BJ (cell line): ENCODE measurements at regions of chr10 and their contacts with region 1.

Region 1: GRCh38 chr10:59124187-59124586 is 52.3 kb upstream of the PHYHIPL start:
- DNase-seq: no peak
- H3K4me3 ChIP-seq: no peak overlapping the region
- H3K27me3 ChIP-seq: 0 out of 2 replicates have a peak, but pooled peaks cover 1% of the 10 kb centered on the region
- CTCF ChIP-seq: no peak

Region 2: DNA sequence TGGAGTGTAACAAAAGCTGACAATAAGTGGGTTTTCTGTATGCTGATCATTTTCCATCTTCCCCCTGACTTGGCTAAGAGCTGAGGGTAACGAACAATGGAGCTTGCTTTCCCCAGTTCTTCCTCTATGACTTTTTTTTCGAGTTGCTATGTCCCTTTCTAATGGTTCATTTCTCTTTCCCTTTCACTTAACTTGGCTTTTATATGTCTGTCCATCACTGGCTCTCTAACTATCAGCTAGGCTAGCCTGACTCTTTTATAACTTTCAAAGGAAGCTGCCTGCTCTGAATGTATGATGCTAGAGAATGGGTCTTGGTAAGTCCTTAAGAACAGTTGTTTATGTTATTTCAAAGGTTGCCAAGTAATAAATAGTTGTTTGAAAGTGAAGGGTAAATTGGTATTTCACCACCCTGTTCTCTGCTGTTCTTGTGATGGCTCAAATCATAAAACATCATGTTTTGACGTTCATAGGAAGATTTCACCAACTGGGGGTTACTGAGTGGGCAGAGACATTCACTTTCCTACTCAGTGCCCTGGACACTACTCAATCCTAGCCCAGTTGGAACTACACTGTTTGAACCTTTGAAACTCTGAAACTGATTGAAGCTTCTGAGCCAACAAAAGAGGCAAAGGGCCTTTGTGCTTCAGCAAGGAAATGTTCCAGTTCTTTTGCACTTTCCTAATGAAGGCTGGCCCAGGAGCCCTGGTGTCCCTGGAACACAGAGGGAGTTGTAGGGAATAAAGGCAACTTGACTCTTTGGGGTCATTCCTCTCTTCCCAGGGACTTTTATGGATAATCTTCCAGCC is 33.2 kb before region 1 on chr10:
- CTCF ChIA-PET with region 1: no interaction called
- POLR2A ChIA-PET with region 1: no interaction called
- DNase-seq: no peak
- H3K4me3 ChIP-seq: no peak overlapping the region
- H3K27me3 ChIP-seq: no peaks in the 10 kb centered on the region; the same call in 1 of the 2 replicates
- CTCF ChIP-seq: no peak

Region 3: DNA sequence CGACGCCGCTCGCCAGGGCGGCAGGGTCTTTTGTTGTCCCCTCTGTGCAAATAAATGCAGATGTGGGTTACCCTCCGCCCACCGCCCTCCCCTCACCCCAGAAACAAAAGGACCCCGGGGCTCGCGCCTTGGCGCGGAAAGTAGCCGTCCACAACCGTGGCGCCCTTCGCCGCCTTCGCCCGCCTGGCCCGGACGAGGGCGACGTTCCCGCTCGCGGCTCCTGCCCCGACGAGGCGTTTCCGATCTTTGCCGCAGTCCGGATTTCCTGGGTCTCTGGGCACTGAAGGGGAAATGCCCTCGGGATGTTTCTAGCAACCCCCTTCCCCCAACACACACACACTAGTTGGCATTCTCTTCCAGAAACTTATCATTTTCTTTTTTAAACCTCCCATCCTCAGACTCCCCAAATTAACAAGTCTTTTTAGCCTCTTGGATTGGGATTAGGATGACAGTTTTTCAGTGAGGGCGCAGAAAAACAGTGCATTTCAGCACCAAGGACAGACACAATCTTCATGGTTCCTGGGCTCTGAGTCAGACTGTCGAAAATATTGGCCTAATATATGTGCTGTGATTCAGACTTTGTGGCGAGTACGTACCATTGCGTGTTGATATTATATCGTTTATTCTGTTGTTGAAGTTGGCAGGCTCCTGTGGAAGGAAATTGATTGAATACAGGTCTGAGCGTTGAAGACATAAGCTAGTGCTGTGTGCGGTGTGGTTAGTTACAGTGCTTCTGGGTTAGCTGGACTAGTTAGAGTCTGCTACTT is 53.0 kb after region 1 on chr10:
- CTCF ChIA-PET with region 1: no interaction called
- POLR2A ChIA-PET with region 1: no interaction called
- DNase-seq: peak; percentile 17
- H3K4me3 ChIP-seq: no peak overlapping the region
- H3K27me3 ChIP-seq: peaks cover 14% of the 10 kb centered on the region
- CTCF ChIP-seq: no peak

Region 4: GRCh38 chr10:59333701-59334100 is 209.5 kb after region 1 on chr10:
- CTCF ChIA-PET with region 1: no interaction called
- POLR2A ChIA-PET with region 1: interaction called, 11 read pairs
- DNase-seq: no peak
- H3K4me3 ChIP-seq: no peak overlapping the region
- H3K27me3 ChIP-seq: no peaks in the 10 kb centered on the region
- CTCF ChIP-seq: no peak